ENCODE measurements at regions of chr18 and their contacts with region 1.

Region 1: GRCh38 chr18:49041435-49042245 is 90.9 kb upstream of the SMAD7 start:
- DNase-seq: peak; percentile 40
- H3K4me3 ChIP-seq: no peak overlapping the region
- H3K27ac ChIP-seq: no peak overlapping the region
- H3K4me1 ChIP-seq: no peaks in the 10 kb centered on the region
- H3K27me3 ChIP-seq: no peaks in the 10 kb centered on the region
- CTCF ChIP-seq: peak; percentile 79 to 80

Region 2: GRCh38 chr18:48475635-48476549 is 565.7 kb before region 1 on chr18:
- CTCF ChIA-PET with region 1: no interaction called
- dilution Hi-C with region 1: loop called (anchors 25 kb)
- in situ Hi-C with region 1: no loop called
- intact Hi-C with region 1: no loop called
- DNase-seq: peak; percentile 57
- H3K4me3 ChIP-seq: no peak overlapping the region
- H3K27ac ChIP-seq: no peak overlapping the region
- H3K4me1 ChIP-seq: no peaks in the 10 kb centered on the region
- H3K27me3 ChIP-seq: no peaks in the 10 kb centered on the region
- CTCF ChIP-seq: peak; percentile 87 to 89

Region 3: DNA sequence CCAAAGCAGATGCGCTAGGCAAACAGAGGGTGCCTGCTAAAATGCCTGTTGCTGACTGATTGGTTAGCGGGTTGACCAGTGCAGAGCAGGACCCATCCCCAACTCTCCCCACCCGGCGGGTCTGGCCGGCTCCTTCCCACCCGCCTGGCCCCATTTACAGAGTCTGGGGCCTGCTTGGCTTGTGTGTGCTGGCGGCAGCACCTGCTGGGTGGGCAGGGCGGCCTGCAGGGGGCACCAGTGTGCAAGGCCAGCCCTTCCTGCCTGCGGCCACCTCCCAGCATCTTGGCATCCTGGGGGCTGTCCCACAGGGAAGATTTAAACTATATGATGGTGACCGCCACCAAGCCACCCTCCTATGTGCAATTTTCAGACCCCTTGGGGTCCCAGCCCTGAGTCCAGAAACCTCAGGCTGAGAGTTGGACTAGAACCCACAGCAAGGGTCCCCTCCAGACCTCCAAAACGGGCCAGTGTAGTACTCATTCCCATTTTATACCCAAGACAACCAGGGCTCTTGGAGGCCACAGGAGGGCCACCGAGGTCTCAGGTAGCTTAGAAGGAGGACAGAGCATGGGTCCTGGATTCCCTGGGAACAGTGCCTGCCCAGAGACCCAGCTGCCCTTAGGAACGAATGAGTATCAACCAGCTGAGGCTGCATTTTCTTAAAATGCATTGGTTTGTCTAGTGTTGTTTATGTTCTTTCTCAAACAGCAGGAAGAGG is 264.5 kb before region 1 on chr18:
- CTCF ChIA-PET with region 1: no interaction called
- dilution Hi-C with region 1: no loop called
- in situ Hi-C with region 1: no loop called
- intact Hi-C with region 1: loop called (anchors 1 kb)
- DNase-seq: peak; percentile 12
- H3K4me3 ChIP-seq: no peak overlapping the region
- H3K27ac ChIP-seq: no peak overlapping the region
- H3K4me1 ChIP-seq: peaks cover 1% of the 10 kb centered on the region
- H3K27me3 ChIP-seq: no peaks in the 10 kb centered on the region
- CTCF ChIP-seq: peak; percentile 70 to 73

Region 4: DNA sequence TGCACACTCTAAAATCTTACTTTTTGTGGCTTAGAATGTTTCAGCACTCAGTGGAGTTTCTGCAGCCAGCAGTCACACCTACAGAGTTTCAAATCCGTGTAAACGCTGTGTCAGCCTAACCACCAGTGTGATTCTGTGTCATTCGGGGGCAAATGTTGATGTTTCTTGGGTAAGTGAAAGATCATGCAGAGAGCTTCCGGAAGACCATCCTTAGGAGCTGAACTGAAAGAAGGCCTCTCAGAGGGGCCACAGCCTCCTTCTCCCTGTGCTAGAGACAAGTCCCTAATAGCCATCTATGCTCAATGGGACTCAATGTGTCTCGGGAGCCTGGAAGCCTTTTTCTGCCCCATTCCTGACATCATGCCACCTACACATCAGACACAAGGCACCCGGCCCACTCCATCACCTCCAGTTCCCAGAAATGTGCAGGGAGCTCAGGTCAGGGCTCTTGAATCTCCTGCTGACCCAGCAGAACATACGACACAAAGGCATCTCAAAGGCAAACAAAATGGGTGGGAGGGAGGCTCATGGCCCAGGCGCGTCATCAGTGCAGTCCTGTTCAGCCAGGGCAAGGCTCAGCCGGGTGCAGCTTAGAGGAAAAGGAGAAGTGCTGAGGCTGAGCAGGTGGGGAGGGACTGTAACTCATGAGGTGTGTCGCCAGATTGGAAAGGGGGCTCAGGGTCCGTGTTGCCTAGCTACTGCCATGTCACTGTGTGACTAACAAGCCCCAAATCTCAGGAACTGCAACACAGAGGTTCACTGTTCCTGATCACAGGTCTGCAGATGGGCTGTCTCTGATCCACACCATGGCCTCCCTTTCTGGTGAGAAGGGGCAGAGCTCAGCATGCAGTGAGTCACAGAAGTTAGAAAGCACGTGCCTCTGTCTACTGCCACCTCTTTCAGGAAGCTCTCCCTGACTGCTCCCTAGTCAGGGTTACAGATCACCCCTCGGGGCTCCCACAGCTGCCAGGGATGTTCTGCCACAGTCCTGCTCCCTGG is 172.9 kb before region 1 on chr18:
- CTCF ChIA-PET with region 1: no interaction called
- dilution Hi-C with region 1: no loop called
- in situ Hi-C with region 1: no loop called
- intact Hi-C with region 1: no loop called
- DNase-seq: peak; percentile 5
- H3K4me3 ChIP-seq: no peak overlapping the region
- H3K27ac ChIP-seq: no peak overlapping the region
- H3K4me1 ChIP-seq: peaks cover 13% of the 10 kb centered on the region
- H3K27me3 ChIP-seq: no peaks in the 10 kb centered on the region
- CTCF ChIP-seq: no peak

Region 5: GRCh38 chr18:48992699-48993555 is 48.7 kb before region 1 on chr18:
- CTCF ChIA-PET with region 1: no interaction called
- dilution Hi-C with region 1: loop called (anchors 5 kb)
- in situ Hi-C with region 1: no loop called
- intact Hi-C with region 1: no loop called
- DNase-seq: no peak
- H3K4me3 ChIP-seq: no peak overlapping the region
- H3K27ac ChIP-seq: no peak overlapping the region
- H3K4me1 ChIP-seq: peaks cover 31% of the 10 kb centered on the region
- H3K27me3 ChIP-seq: no peaks in the 10 kb centered on the region
- CTCF ChIP-seq: no peak

Region 6: DNA sequence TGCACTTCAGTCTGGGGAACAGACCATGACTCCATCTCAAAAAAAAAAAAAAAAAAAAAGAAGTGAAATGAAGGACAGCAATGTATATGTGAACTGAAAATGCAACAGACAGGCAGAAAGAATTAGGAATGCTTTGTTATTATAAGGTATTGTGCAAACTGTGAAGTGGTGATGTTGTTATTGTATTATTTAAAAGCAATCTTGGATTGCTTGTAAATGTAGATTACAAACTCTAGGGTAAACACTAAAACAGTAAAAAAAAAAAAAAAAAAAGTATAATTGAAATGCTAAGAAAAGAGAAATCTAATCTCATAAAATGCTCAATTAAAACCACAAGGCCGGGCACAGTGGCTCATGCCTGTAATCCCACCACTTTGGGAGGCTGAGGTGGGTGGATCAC is 393.5 kb after region 1 on chr18:
- CTCF ChIA-PET with region 1: interaction called, 11 read pairs
- dilution Hi-C with region 1: no loop called
- in situ Hi-C with region 1: no loop called
- intact Hi-C with region 1: loop called (anchors 10 kb)
- DNase-seq: no peak
- H3K4me3 ChIP-seq: no peak overlapping the region
- H3K27ac ChIP-seq: no peak overlapping the region
- H3K4me1 ChIP-seq: peaks cover 9% of the 10 kb centered on the region
- H3K27me3 ChIP-seq: no peaks in the 10 kb centered on the region
- CTCF ChIP-seq: no peak